Ascending aorta (tissue), 2 donors: ENCODE measurements at regions of chr10 and their contacts with region 1.

Region 1: GRCh38 chr10:122495406-122496340 is 34.3 kb downstream of the HTRA1 start:
- DNase-seq: peak in 1 of 2 donors; percentile 88
- H3K4me3 ChIP-seq: peak overlapping the region in 1 of 2 donors; percentile 2
- H3K27ac ChIP-seq: peak overlapping the region; percentile 79 to 95
- H3K4me1 ChIP-seq: peaks cover 37 to 73% of the 10 kb centered on the region in 2 donors
- H3K27me3 ChIP-seq: no peaks in the 10 kb centered on the region
- CTCF ChIP-seq: no peak

Region 2: GRCh38 chr10:122286867-122287266 is 208.8 kb before region 1 on chr10:
- intact Hi-C with region 1: loop called (anchors 5 kb)
- DNase-seq: peak; percentile 74 to 89
- H3K4me3 ChIP-seq: no peak overlapping the region
- H3K27ac ChIP-seq: peak overlapping the region; percentile 67 to 73
- H3K4me1 ChIP-seq: peaks cover 6 to 15% of the 10 kb centered on the region in 2 donors
- H3K27me3 ChIP-seq: no peaks in the 10 kb centered on the region
- CTCF ChIP-seq: no peak

Region 3: GRCh38 chr10:122374237-122374869 is 121.3 kb before region 1 on chr10 and contains the start of gene PLEKHA1:
- intact Hi-C with region 1: loop called (anchors 5 kb)
- DNase-seq: peak; percentile 83 to 98
- H3K4me3 ChIP-seq: peak within 1 kb of the TSS; percentile 78 to 95
- H3K27ac ChIP-seq: peak within 1 kb of the TSS; percentile 88 to 99
- H3K4me1 ChIP-seq: peaks cover 0 to 20% of the 10 kb centered on the region in 2 donors
- H3K27me3 ChIP-seq: no peaks in the 10 kb centered on the region
- CTCF ChIP-seq: no peak
- total RNA-seq, gene PLEKHA1: 128 TPM

Region 4: GRCh38 chr10:122468926-122469781 is 26.5 kb before region 1 on chr10:
- intact Hi-C with region 1: loop called (anchors 1 kb)
- DNase-seq: peak in 1 of 2 donors; percentile 69
- H3K4me3 ChIP-seq: no peak overlapping the region
- H3K27ac ChIP-seq: peak overlapping the region; percentile 56 to 65
- H3K4me1 ChIP-seq: peaks cover 6 to 51% of the 10 kb centered on the region in 2 donors
- H3K27me3 ChIP-seq: no peaks in the 10 kb centered on the region
- CTCF ChIP-seq: no peak

Region 5: GRCh38 chr10:124418726-124419501 is 1923.2 kb after region 1 on chr10 and contains the start of gene OAT:
- intact Hi-C with region 1: loop called (anchors 10 kb)
- DNase-seq: peak; percentile 92 to 98
- H3K4me3 ChIP-seq: peak within 1 kb of the TSS; percentile 77 to 94
- H3K27ac ChIP-seq: peak within 1 kb of the TSS; percentile 95 to 97
- H3K4me1 ChIP-seq: peaks cover 4 to 30% of the 10 kb centered on the region in 2 donors
- H3K27me3 ChIP-seq: no peaks in the 10 kb centered on the region
- CTCF ChIP-seq: no peak
- total RNA-seq, gene OAT: 48.2 TPM